Gastrocnemius medialis (tissue), 4 donors: ENCODE measurements at regions of chr18 and their contacts with region 1.

Region 1: DNA sequence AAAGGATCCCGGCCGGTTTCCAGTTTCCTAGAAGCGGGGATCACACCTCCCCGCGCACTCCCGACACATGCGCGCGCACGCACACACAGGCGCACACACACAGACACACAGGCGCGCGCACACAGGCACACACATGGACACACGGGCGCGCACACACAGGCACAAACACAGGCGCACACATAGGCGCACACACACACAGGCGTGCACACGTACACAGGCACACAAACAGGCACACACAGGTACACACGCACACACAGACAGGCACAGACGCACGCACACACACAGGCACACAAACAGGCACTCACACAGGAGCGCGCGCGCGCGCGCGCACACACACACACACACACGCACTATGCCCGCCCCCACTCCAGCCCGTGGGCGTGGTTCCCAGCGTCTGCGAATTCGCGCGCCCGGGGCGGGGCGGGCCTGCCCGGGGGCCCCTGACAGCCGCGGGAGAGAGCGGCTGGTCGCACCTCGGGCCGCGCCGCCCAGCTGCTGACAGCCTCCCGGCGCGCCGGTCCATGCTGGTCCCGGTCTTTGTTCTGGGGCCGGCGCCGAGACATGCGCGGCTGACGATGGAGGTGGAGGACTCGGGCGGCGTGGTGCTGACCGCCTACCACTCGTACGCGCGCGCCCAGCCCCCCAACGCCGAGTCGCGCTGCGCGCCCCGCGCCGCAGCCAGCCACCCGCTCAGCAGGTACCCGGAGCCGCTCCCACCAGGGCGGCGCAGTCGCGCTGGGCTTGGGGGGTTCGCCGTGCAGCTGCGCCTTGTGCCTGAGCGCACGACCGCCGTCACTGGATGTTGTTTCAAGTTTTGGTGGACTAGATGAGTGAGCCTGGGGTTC is at the start of gene ARHGAP28:
- DNase-seq: peak; percentile 50 to 78
- ATAC-seq: peak; percentile 60 to 73
- H3K4me3 ChIP-seq: peak within 1 kb of the TSS; percentile 60 to 67 (median 64)
- H3K27ac ChIP-seq: peak within 1 kb of the TSS; percentile 80 to 88 (median 88)
- H3K4me1 ChIP-seq: peaks cover 11 to 35% of the 10 kb centered on the region in 2 donors
- H3K27me3 ChIP-seq: no peaks in the 10 kb centered on the region
- CTCF ChIP-seq: peak in 4 of 5 experiments; percentile 31 to 39 (median 34)
- POLR2A ChIP-seq: peak; percentile 59 to 72
- total RNA-seq, gene ARHGAP28: 4.6 to 17.9 (median 6.2) TPM

Region 2: DNA sequence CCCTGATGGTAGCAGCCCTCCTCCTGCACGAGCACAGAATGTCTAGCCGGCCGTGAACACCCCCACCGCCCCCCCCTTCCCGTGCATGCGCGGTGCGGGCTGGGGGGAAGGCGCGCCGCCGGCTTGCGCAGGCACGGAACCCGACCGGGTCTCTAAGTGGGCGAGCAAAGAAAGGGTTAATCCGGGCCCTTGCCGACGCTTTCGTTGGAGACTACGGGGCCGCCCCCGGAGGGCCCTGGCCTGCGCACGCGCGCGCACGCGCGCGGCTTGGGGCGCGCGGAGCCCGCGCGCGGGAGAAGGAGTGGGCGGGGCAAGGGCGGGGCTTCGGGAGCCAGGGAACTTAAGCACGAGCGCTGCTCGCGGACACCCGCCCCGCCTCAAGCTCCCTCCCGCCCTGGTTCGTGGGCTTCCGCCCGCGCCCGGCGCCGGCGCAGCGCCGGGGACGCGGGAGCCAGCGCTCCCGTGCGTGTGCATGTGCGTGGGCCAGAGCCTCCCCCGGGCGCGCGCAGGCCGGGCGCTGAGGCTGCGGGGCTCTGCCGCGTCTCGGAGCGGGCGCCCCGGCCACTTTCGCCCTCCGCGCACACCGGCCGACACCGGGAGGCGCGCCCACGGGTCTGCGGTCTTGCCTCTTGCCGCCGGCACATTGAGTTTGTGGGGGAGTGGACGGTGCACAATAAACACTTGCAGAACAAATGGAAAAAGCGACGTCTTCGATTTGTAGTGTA is 1433.3 kb before region 1 on chr18:
- in situ Hi-C with region 1: no loop called
- intact Hi-C with region 1: loop called (anchors 5 kb)
- DNase-seq: peak; percentile 90 to 96
- ATAC-seq: peak; percentile 78 to 82
- H3K4me3 ChIP-seq: peak overlapping the region; percentile 76 to 97 (median 94)
- H3K27ac ChIP-seq: peak overlapping the region; percentile 93 to 99 (median 96)
- H3K4me1 ChIP-seq: peaks cover 8 to 15% of the 10 kb centered on the region in 2 donors
- H3K27me3 ChIP-seq: no peaks in the 10 kb centered on the region
- CTCF ChIP-seq: peak in 1 of 5 experiments; percentile 11
- POLR2A ChIP-seq: peak; percentile 70 to 84

Region 3: GRCh38 chr18:6576718-6577375 is 152.6 kb before region 1 on chr18:
- in situ Hi-C with region 1: no loop called
- intact Hi-C with region 1: no loop called
- DNase-seq: no peak
- ATAC-seq: no peak
- H3K4me3 ChIP-seq: no peak overlapping the region
- H3K27ac ChIP-seq: no peak overlapping the region
- H3K4me1 ChIP-seq: no peaks in the 10 kb centered on the region
- H3K27me3 ChIP-seq: no peaks in the 10 kb centered on the region
- CTCF ChIP-seq: no peak
- POLR2A ChIP-seq: no peak

Region 4: DNA sequence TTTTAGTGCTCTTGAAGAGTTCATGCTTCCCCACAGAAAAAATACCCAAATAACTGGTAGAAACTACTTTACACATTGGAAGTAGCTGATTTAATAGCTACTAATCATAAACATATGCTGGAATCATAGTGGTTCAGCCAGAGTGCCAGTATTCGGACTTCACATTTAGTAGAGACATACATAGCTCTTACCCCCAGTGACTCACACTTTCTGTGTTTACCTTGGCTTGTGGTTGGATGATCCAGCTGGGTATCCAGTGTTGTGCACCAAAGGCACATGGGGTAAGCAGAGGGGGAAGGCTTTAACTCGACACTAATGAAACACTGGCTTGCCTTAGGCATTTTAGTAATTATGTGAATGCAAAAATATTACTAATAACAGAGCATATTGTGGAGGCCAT is 18.2 kb after region 1 on chr18:
- in situ Hi-C with region 1: no loop called
- intact Hi-C with region 1: loop called (anchors 2 kb)
- DNase-seq: peak; percentile 54 to 67
- ATAC-seq: peak; percentile 88 to 90
- H3K4me3 ChIP-seq: peak overlapping the region in 3 of 4 donors; percentile 7 to 15 (median 15)
- H3K27ac ChIP-seq: peak overlapping the region; percentile 79 to 90 (median 84)
- H3K4me1 ChIP-seq: peaks cover 14 to 63% of the 10 kb centered on the region in 2 donors
- H3K27me3 ChIP-seq: no peaks in the 10 kb centered on the region
- CTCF ChIP-seq: no peak
- POLR2A ChIP-seq: no peak

Region 5: GRCh38 chr18:6835345-6835744 is 105.9 kb after region 1 on chr18:
- in situ Hi-C with region 1: no loop called
- intact Hi-C with region 1: loop called (anchors 10 kb)
- DNase-seq: no peak
- ATAC-seq: no peak
- H3K4me3 ChIP-seq: no peak overlapping the region
- H3K27ac ChIP-seq: no peak overlapping the region
- H3K4me1 ChIP-seq: no peaks in the 10 kb centered on the region
- H3K27me3 ChIP-seq: no peaks in the 10 kb centered on the region
- CTCF ChIP-seq: no peak
- POLR2A ChIP-seq: no peak

Region 6: GRCh38 chr18:6885992-6886796 is 156.7 kb after region 1 on chr18:
- in situ Hi-C with region 1: loop called in 1 of 4 experiments (anchors 10 kb)
- intact Hi-C with region 1: no loop called
- DNase-seq: peak in 1 of 2 donors; percentile 15
- ATAC-seq: peak; percentile 56 to 76
- H3K4me3 ChIP-seq: no peak overlapping the region
- H3K27ac ChIP-seq: no peak overlapping the region
- H3K4me1 ChIP-seq: peaks cover 0 to 5% of the 10 kb centered on the region in 2 donors
- H3K27me3 ChIP-seq: no peaks in the 10 kb centered on the region
- CTCF ChIP-seq: peak; percentile 54 to 75 (median 70)
- POLR2A ChIP-seq: no peak

Region 7: DNA sequence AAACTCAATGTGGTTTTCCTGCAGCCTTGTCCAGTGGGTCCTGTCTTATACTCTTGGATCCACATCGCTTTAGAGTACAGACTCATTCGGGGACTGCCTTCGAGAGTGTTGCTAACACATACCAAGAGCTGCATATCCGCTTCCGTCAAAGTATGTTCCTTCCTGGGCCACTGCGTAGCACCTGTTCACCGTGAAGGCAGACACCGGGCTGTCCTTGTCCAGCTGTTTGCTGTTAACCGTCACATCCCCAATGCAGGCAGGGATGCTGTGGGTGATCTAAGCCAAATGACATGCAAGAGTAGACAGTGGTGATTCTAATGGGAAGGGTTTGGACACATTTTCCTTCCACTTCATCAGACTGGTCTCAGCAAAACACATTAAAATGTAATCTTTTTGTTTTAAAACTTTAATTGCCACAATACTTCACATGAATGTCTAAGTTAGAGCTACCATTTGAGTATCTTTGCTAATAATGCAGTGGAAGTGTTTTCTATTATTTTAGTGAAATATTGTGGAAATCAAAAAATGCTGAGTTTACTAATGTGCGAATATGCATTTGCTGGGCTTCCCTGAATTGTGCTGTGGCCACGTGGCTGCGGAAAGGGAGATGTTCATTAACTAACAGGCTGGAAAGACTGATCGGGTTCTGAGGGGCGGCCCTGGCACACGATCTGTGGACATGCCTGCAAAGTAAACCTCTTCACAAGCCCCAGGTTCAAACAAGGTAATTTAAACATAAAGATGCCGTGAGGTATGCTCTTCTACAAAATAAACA is 219.0 kb after region 1 on chr18:
- in situ Hi-C with region 1: no loop called
- intact Hi-C with region 1: no loop called
- DNase-seq: no peak
- ATAC-seq: no peak
- H3K4me3 ChIP-seq: no peak overlapping the region
- H3K27ac ChIP-seq: no peak overlapping the region
- H3K4me1 ChIP-seq: no peaks in the 10 kb centered on the region
- H3K27me3 ChIP-seq: no peaks in the 10 kb centered on the region
- CTCF ChIP-seq: no peak
- POLR2A ChIP-seq: no peak